IMR-90 (cell line): ENCODE measurements at regions of chr5 and their contacts with region 1.

Region 1: DNA sequence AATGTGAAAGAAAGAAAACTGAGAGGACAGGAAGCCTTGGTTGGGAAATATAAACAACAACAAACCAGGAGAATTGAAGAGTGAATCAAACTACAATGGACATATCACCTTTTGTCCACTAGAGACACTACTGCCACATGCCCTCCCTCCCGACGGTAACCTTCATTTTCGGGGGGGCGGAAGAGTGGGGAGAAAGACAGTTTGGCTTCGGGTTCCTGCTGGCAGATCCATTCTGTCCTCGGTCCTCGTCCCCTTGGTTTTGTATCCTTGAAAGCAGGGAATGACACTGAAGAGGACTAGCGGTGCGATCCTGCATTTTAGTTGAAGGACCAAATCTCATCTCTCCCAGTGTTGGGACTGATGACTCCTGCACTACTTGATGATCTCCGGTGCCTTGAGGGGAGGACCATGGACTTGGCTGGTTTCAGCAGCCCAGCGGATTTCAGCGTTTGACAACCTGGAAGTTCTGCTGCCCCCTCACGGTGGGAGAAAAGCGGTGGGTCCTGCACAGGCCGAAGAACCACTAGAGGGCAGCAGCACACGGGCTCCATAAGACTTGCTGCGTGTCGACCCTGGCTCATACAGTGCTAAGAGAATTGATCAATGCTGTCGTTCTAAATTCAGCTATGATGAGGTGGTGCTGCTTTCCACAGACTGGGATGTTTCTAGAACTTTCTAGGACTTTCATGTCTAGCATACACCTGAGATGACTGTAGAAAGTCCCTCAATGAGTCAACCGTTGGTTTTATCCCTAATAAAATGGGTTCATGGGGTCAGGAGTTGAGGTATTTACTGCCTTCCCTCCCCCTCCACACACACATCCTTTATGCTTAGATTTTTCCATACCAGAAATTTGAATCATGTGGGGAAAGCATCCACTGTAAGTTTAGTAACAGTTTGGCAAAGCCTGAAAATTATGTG is 15.1 kb upstream of the ZNF131 start:
- DNase-seq: peak; percentile 96
- ATAC-seq: peak; percentile 94
- H3K4me3 ChIP-seq: peak overlapping the region; percentile 40
- H3K27ac ChIP-seq: peak overlapping the region; percentile 66
- H3K4me1 ChIP-seq: peaks cover 1% of the 10 kb centered on the region; the same call in 1 of the 2 replicates
- H3K27me3 ChIP-seq: no peaks in the 10 kb centered on the region
- CTCF ChIP-seq: peak; percentile 100; the same call in 1 of the 2 replicates
- POLR2A ChIP-seq: no peak
- RAD21 ChIP-seq: peak; percentile 83

Region 2: GRCh38 chr5:42908509-42909488 is 196.8 kb before region 1 on chr5:
- CTCF ChIA-PET with region 1: interaction called, 5 read pairs
- POLR2A ChIA-PET with region 1: no interaction called
- dilution Hi-C with region 1: no loop called
- in situ Hi-C with region 1: no loop called
- intact Hi-C with region 1: loop called (anchors 5 kb)
- DNase-seq: peak; percentile 85
- ATAC-seq: peak; percentile 96
- H3K4me3 ChIP-seq: peak overlapping the region; percentile 50
- H3K27ac ChIP-seq: no peak overlapping the region
- H3K4me1 ChIP-seq: no peaks in the 10 kb centered on the region
- H3K27me3 ChIP-seq: peaks cover 13% of the 10 kb centered on the region
- CTCF ChIP-seq: peak; percentile 83
- POLR2A ChIP-seq: no peak
- RAD21 ChIP-seq: peak; percentile 78

Region 3: DNA sequence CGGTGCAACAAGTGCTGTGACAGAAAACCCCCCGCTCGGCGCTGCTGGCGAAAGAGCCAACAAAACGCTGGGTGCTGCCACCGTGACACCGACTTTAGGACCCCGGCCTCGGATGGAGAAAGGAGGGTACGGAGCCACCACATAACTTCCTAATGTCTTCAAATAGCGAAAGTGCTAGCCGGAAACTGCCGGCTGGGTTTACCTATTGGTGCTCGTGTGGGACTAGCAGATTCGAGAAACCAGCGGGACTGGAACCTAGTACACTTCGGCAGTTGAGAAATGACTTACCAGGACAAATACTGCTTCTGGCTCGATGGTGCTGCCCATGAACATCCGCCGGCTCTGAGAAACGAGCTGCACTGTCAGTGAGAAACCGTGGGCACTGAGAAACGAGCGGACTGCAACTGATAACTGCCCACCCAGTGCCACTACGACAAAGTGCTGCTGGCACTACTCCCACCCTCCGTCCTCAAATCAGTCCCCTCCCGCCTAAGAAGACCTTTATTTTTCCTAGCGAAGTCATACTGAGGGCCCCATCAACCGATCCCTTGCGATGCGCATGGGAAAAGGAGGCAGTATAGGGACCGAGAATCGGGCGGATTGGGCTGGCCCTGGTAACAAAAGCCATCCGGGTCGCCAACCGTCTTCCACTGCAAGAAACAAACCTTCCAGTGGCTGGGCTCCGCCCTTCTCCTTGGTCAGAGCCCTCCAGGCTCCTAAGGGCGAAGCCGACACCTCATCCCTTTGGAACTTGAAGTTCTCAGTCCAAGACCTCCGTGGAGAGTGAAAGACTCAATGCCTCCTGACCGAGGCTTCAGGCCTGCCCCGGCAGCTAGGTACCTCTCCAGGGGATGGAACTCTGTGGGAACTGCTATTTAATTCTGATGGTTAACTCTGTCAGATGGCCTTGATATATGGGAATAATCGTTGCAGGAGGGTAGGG is 38.6 kb before region 1 on chr5:
- CTCF ChIA-PET with region 1: interaction called, 3 read pairs
- POLR2A ChIA-PET with region 1: no interaction called
- dilution Hi-C with region 1: no loop called
- in situ Hi-C with region 1: no loop called
- intact Hi-C with region 1: loop called (anchors 2 kb)
- DNase-seq: peak; percentile 91
- ATAC-seq: peak; percentile 56
- H3K4me3 ChIP-seq: peak overlapping the region; percentile 69
- H3K27ac ChIP-seq: peak overlapping the region; percentile 88
- H3K4me1 ChIP-seq: peaks cover 4% of the 10 kb centered on the region
- H3K27me3 ChIP-seq: no peaks in the 10 kb centered on the region
- CTCF ChIP-seq: no peak
- POLR2A ChIP-seq: peak; percentile 89
- RAD21 ChIP-seq: no peak

Region 4: GRCh38 chr5:43305948-43306565 is 200.4 kb after region 1 on chr5:
- CTCF ChIA-PET with region 1: no interaction called
- POLR2A ChIA-PET with region 1: no interaction called
- dilution Hi-C with region 1: no loop called
- in situ Hi-C with region 1: loop called (anchors 25 kb)
- intact Hi-C with region 1: loop called (anchors 1 kb)
- DNase-seq: peak; percentile 73
- ATAC-seq: peak; percentile 85
- H3K4me3 ChIP-seq: no peak overlapping the region
- H3K27ac ChIP-seq: no peak overlapping the region
- H3K4me1 ChIP-seq: no peaks in the 10 kb centered on the region
- H3K27me3 ChIP-seq: no peaks in the 10 kb centered on the region
- CTCF ChIP-seq: peak; percentile 68
- POLR2A ChIP-seq: no peak
- RAD21 ChIP-seq: peak; percentile 55

Region 5: GRCh38 chr5:43389679-43390329 is 284.2 kb after region 1 on chr5:
- CTCF ChIA-PET with region 1: interaction called, 8 read pairs
- POLR2A ChIA-PET with region 1: no interaction called
- dilution Hi-C with region 1: no loop called
- in situ Hi-C with region 1: loop called (anchors 10 kb)
- intact Hi-C with region 1: loop called (anchors 1 kb)
- DNase-seq: peak; percentile 90
- ATAC-seq: peak; percentile 99
- H3K4me3 ChIP-seq: no peak overlapping the region
- H3K27ac ChIP-seq: no peak overlapping the region
- H3K4me1 ChIP-seq: no peaks in the 10 kb centered on the region
- H3K27me3 ChIP-seq: peaks cover 5% of the 10 kb centered on the region
- CTCF ChIP-seq: peak; percentile 93
- POLR2A ChIP-seq: no peak
- RAD21 ChIP-seq: peak; percentile 78